ENCODE measurements at regions of chr4 and their contacts with region 1.

Region 1: GRCh38 chr4:80365928-80366327 is 30.4 kb downstream of the CFAP299 start:
- DNase-seq: peak in 2 of 3 donors; percentile 58 to 70
- ATAC-seq: peak in 1 of 2 donors; percentile 41
- H3K4me3 ChIP-seq: no peak overlapping the region
- H3K27ac ChIP-seq: no peak overlapping the region
- H3K4me1 ChIP-seq: no peaks in the 10 kb centered on the region
- H3K27me3 ChIP-seq: no peaks in the 10 kb centered on the region

Region 2: DNA sequence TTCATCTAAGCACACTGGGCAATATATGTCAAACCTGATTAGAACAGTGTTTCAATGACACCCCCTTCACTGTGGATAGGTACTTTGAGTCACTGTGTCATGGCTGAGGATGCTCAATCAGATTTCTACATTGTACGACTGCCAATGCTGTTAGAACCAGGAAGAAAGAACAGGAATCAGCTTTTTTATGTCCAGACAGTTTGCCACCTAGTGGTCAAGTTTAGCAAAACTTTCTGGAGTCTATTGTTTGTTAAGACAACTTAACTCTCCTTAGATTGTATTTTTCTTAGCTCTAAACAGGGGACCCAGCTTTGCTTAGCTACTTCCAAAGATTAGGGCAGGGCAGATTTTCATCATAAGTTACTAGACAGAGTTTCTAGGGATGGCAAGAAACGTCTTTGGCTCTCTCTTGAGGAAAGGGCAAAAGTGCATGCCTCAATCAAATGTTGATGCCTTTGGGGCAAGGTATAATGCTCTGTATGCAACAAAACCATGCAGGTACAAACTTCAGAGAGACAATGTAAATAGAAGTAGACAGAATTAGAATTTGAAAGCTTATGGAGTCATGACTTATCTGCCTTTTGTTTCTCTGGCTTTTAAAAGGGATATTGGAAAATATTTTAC is 624.1 kb after region 1 on chr4:
- intact Hi-C with region 1: loop called in 2 of 4 experiments (anchors 5 to 10 kb)
- DNase-seq: no peak
- ATAC-seq: peak in 1 of 2 donors; percentile 29
- H3K4me3 ChIP-seq: no peak overlapping the region
- H3K27ac ChIP-seq: no peak overlapping the region
- H3K4me1 ChIP-seq: no peaks in the 10 kb centered on the region
- H3K27me3 ChIP-seq: no peaks in the 10 kb centered on the region

Region 3: DNA sequence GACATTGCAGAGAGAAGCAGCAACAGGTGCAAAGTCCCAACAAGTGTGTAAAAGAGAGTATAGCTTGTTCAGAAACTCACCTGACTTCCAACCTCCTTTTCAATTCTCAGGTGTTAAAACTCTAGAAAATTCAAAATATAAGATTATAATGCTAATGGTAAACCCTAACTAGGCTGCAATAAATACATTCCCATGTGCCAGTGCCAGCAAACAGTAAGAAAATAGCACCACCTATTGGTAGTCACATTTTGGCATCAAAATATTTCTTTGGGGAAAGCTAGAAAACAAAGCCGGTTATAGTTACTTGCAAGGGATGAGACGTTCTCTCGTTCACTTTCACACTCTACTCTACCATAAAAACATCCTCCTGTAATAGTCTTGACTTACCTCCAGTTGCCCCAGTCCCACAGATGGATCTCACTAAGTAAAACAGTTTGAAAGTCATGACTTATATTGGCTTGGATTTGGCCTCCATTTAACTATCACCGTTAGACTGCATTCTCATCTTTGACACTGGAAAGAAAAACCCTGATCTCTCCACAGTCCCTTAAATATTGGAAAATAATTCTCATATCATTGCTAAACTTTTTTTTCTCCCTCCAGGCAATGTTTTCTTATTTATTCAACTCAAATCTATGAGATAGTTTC is 674.2 kb after region 1 on chr4:
- intact Hi-C with region 1: loop called in 2 of 4 experiments (anchors 5 to 10 kb)
- DNase-seq: no peak
- ATAC-seq: no peak
- H3K4me3 ChIP-seq: no peak overlapping the region
- H3K27ac ChIP-seq: no peak overlapping the region
- H3K4me1 ChIP-seq: no peaks in the 10 kb centered on the region
- H3K27me3 ChIP-seq: no peaks in the 10 kb centered on the region

Region 4: GRCh38 chr4:81052119-81053068 is 686.5 kb after region 1 on chr4:
- intact Hi-C with region 1: loop called in 3 of 4 experiments (anchors 5 to 10 kb)
- DNase-seq: peak; percentile 42 to 82 (median 63)
- ATAC-seq: peak; percentile 69 to 70
- H3K4me3 ChIP-seq: no peak overlapping the region
- H3K27ac ChIP-seq: no peak overlapping the region
- H3K4me1 ChIP-seq: no peaks in the 10 kb centered on the region
- H3K27me3 ChIP-seq: no peaks in the 10 kb centered on the region